ENCODE measurements at regions of chr1 and their contacts with region 1.

Region 1: DNA sequence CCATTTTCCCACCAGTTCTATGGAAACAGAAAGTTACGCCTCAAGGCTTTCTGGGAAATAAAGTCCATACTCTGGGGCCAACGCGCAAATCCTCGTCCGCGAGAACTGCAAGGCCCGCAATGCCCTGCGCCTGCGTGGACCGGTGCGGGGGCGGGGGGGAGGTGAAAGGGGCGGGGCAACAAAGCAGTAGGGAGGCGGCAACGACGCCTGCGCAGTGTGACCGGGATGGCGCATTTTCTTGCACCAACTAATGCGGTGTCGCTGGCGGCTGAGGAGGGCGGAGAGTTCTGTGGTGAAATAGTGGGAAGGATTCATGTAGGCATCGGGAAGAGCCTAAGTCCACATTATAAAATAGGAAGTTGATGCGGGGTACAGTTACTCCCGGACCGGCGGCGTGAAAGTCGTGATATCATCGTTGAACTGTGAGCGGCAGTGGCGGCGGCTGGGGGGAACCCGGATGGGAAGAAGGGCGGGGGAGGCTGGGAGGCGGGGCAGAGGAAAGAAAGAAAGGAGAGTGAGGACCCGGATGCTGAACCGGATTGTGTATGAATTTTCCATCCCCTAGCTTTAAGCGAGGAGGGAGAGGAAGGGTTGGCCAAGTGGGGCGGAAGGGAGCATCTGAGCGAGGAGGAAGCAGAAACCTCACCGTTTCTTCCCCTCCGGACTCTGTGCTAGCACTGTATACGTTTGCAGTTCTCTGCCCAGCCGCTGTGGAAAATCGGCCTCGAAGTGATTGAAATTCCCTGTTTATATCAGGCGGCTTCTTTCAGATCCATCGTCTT is at the start of gene GGPS1:
- DNase-seq: peak; percentile 93 to 99
- H3K4me3 ChIP-seq: peak within 1 kb of the TSS; percentile 66 to 98
- H3K27ac ChIP-seq: peak within 1 kb of the TSS; percentile 95 to 100
- H3K4me1 ChIP-seq: peaks cover 9 to 43% of the 10 kb centered on the region in 2 donors
- H3K27me3 ChIP-seq: no peaks in the 10 kb centered on the region
- CTCF ChIP-seq: no peak
- total RNA-seq, gene GGPS1: 7.2 TPM

Region 2: GRCh38 chr1:234579967-234580366 is 748.6 kb before region 1 on chr1:
- intact Hi-C with region 1: loop called (anchors 10 kb)
- DNase-seq: no peak
- H3K4me3 ChIP-seq: no peak overlapping the region
- H3K27ac ChIP-seq: no peak overlapping the region
- H3K4me1 ChIP-seq: peaks cover 8 to 32% of the 10 kb centered on the region in 2 donors
- H3K27me3 ChIP-seq: no peaks in the 10 kb centered on the region
- CTCF ChIP-seq: no peak

Region 3: GRCh38 chr1:235128456-235129328 is 199.9 kb before region 1 on chr1 and contains the start of gene TOMM20:
- intact Hi-C with region 1: loop called (anchors 2 kb)
- DNase-seq: peak; percentile 84 to 98
- H3K4me3 ChIP-seq: peak within 1 kb of the TSS; percentile 60 to 99
- H3K27ac ChIP-seq: peak within 1 kb of the TSS; percentile 86 to 94
- H3K4me1 ChIP-seq: peaks cover 0 to 4% of the 10 kb centered on the region in 2 donors
- H3K27me3 ChIP-seq: no peaks in the 10 kb centered on the region
- CTCF ChIP-seq: peak in 1 of 3 experiments; percentile 3
- total RNA-seq, gene TOMM20: 25.3 TPM

Region 4: DNA sequence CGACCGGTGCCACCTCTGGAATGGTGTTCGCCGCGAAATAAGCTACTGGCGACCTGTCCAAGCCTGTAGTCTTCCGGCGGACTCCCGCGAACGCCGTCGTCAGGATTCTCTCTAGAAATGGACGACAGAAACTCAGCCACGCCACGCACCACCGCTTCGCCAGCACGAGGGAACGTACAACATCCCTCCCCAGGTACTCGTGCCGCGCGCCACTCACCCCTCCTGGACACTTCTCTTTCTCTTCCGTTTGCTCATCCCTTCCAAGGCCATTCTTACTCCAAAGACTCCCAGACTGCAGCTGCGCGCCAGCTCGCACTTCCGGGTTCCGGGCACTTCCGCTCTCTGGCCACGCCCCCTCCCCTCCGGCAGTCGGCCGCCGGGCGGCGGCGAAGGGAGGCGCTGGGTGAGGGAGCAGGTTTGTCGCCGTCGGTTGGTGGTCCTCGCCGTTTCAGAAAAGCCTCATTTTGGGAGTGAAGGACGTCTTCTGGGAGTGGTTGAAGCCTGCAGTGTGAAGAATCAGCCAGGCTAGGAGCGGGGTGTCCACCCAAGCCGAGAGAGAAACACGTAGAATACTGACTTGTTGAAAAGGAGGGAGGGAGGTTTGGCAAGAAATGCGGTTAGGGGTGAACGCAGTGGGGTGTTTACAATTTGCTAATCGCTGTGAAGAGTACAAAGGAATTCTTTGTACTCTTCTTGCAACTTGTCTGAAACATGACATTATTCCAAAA is 167.4 kb before region 1 on chr1 and contains the start of gene RBM34:
- intact Hi-C with region 1: loop called (anchors 1 kb)
- DNase-seq: peak; percentile 64 to 95
- H3K4me3 ChIP-seq: peak within 1 kb of the TSS; percentile 67 to 86
- H3K27ac ChIP-seq: peak within 1 kb of the TSS; percentile 85
- H3K4me1 ChIP-seq: peaks cover 6 to 9% of the 10 kb centered on the region in 2 donors
- H3K27me3 ChIP-seq: no peaks in the 10 kb centered on the region
- CTCF ChIP-seq: peak in 2 of 3 experiments; percentile 15 to 35
- total RNA-seq, gene RBM34: 53.6 TPM

Region 5: GRCh38 chr1:235239851-235240250 is 88.7 kb before region 1 on chr1:
- intact Hi-C with region 1: no loop called
- DNase-seq: no peak
- H3K4me3 ChIP-seq: no peak overlapping the region
- H3K27ac ChIP-seq: no peak overlapping the region
- H3K4me1 ChIP-seq: no peaks in the 10 kb centered on the region
- H3K27me3 ChIP-seq: no peaks in the 10 kb centered on the region
- CTCF ChIP-seq: no peak

Region 6: DNA sequence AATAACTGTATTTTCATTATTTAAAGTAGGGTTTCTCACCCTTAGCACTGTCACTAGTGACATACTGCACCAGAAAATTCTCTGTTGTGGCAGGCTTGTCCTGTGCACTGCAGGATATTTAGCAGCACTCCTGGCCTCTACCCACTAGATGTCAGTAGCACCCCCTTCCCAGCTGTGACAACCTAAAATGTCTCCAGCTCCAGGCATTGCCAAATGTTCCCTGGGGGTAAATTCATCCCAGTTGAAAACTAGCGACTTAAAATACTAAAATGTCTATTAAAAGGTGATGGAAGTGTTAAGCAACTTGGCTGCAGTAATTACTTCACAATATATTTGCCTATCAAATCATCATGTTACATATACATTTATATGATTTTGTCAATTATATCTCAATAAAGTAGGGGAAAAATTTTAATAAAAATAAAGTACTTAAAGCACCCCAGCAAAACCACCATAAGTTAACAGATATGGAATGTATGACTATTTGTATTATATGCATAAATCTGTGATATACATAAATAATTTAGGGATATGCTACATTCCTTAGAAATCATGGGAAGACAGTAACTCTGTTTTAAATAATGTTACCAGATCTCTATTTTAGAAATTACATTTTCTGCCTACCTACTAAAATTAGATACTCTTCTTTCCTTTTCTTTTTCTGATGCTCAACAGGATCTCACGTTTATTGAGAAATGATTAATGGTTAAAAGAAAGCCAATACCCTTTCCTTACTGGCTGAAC is 75.2 kb before region 1 on chr1:
- intact Hi-C with region 1: loop called (anchors 2 kb)
- DNase-seq: peak in 1 of 2 donors; percentile 77
- H3K4me3 ChIP-seq: no peak overlapping the region
- H3K27ac ChIP-seq: no peak overlapping the region
- H3K4me1 ChIP-seq: no peaks in the 10 kb centered on the region
- H3K27me3 ChIP-seq: no peaks in the 10 kb centered on the region
- CTCF ChIP-seq: peak; percentile 53 to 87 (median 73)

Region 7: GRCh38 chr1:235367000-235367908 is 38.7 kb after region 1 on chr1 and contains the start of gene TBCE:
- intact Hi-C with region 1: loop called (anchors 1 kb)
- DNase-seq: peak; percentile 86 to 99
- H3K4me3 ChIP-seq: peak within 1 kb of the TSS; percentile 68 to 77
- H3K27ac ChIP-seq: peak within 1 kb of the TSS; percentile 68 to 70
- H3K4me1 ChIP-seq: peaks cover 0 to 5% of the 10 kb centered on the region in 2 donors
- H3K27me3 ChIP-seq: no peaks in the 10 kb centered on the region
- CTCF ChIP-seq: peak in 1 of 3 experiments; percentile 16
- total RNA-seq, gene TBCE: 67.8 TPM

Region 8: GRCh38 chr1:235415008-235415904 is 86.7 kb after region 1 on chr1:
- intact Hi-C with region 1: loop called (anchors 2 kb)
- DNase-seq: peak in 1 of 2 donors; percentile 71
- H3K4me3 ChIP-seq: no peak overlapping the region
- H3K27ac ChIP-seq: no peak overlapping the region
- H3K4me1 ChIP-seq: peaks cover 2 to 4% of the 10 kb centered on the region in 2 donors
- H3K27me3 ChIP-seq: no peaks in the 10 kb centered on the region
- CTCF ChIP-seq: peak; percentile 46 to 59 (median 54)

Measured in ascending aorta (tissue), 2 donors.